Dorsolateral prefrontal cortex (tissue), 120 donors: ENCODE measurements at regions of chr5 and their contacts with region 1.

Region 1: DNA sequence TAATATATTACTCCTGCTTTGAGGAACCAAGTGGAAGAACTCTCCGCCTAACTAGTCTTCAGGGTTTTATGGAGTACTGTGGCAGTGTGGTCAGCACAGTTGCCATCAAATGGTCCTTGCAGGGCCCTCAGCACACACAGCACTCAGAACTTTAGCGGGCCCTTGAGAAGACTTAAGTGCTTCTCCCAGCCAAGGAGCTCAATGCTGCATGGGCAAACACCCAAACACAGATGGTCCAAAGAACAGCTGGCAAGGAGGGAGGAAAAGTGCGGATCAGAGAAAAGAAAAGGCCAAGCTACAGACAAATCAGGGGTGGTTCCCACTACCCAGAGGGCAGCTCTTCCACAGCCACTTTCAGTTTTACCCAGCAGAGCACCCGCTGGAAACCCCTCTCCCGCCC is 98.6 kb downstream of the SPOCK1 start:
- DNase-seq: no peak
- H3K4me3 ChIP-seq: no peak overlapping the region
- H3K27ac ChIP-seq: peak overlapping the region in 11 of 59 donors; percentile 3 to 55 (median 41)
- H3K27me3 ChIP-seq: no peaks in the 10 kb centered on the region
- CTCF ChIP-seq: no peak

Region 2: GRCh38 chr5:136811551-136811950 is 589.0 kb before region 1 on chr5:
- intact Hi-C with region 1: no loop called
- DNase-seq: peak in 5 of 10 donors; percentile 15 to 60 (median 47)
- H3K4me3 ChIP-seq: no peak overlapping the region
- H3K27ac ChIP-seq: peak overlapping the region in 21 of 59 donors; percentile 10 to 74 (median 39)
- H3K27me3 ChIP-seq: no peaks in the 10 kb centered on the region
- CTCF ChIP-seq: no peak

Region 3: GRCh38 chr5:137114529-137114928 is 286.0 kb before region 1 on chr5:
- intact Hi-C with region 1: no loop called
- DNase-seq: no peak
- H3K4me3 ChIP-seq: no peak overlapping the region
- H3K27ac ChIP-seq: no peak overlapping the region
- H3K27me3 ChIP-seq: no peaks in the 10 kb centered on the region
- CTCF ChIP-seq: no peak

Region 4: GRCh38 chr5:137389042-137389441 is 11.5 kb before region 1 on chr5:
- intact Hi-C with region 1: loop called in 1 of 2 experiments (anchors 1 kb)
- DNase-seq: no peak
- H3K4me3 ChIP-seq: no peak overlapping the region
- H3K27ac ChIP-seq: peak overlapping the region in 57 of 59 donors; percentile 3 to 79 (median 63)
- H3K27me3 ChIP-seq: no peaks in the 10 kb centered on the region
- CTCF ChIP-seq: no peak

Region 5: GRCh38 chr5:137507150-137507549 is 106.6 kb after region 1 on chr5:
- intact Hi-C with region 1: no loop called
- DNase-seq: no peak
- H3K4me3 ChIP-seq: no peak overlapping the region
- H3K27ac ChIP-seq: no peak overlapping the region
- H3K27me3 ChIP-seq: peaks cover 0 to 11% (median 0%) of the 10 kb centered on the region in 45 donors
- CTCF ChIP-seq: no peak